WTC11 (cell line): ENCODE measurements at regions of chr19 and their contacts with region 1.

Region 1: GRCh38 chr19:4267101-4267900 is 11.8 kb upstream of the SHD start:
- DNase-seq: peak; percentile 88
- ATAC-seq: peak; percentile 93
- H3K4me3 Mint-ChIP-seq: no peak overlapping the region
- H3K27ac Mint-ChIP-seq: 0 out of 2 replicates have a peak overlapping the region, but pooled peaks have one; percentile 5
- H3K4me1 Mint-ChIP-seq: no peaks in the 10 kb centered on the region; the same call in 1 of the 2 replicates
- H3K27me3 Mint-ChIP-seq: no peaks in the 10 kb centered on the region
- CTCF ChIP-seq: peak; percentile 86

Region 2: DNA sequence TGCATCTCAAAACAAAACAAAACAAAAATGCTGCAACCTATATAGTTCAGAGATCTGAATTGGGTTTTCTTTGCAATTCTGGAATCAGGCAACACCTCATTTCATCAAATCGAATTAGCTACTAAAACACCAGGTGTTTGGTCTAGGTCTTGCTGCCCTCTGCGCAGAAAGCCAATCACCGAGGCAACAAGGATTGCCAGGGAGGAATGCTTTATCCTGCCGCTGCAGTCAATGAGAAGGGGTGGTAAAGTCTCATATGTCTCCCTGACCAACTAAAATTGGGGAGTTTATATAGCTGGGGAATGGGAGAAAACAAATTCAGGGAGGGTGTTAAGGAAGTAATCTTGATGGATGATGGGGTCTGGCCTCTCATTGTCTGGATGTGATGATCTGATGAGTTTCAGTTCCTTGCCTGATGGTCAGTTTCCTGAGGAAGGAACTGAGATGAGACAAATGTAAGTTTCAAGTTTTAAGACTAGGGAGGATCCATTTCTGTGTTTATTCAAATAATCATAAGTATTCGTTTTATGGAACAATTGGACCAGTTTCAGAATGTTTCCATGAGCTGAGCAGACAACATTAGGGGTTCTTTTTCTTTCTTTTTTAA is 25.4 kb before region 1 on chr19:
- CTCF ChIA-PET with region 1: interaction called, 23 read pairs
- POLR2A ChIA-PET with region 1: no interaction called
- DNase-seq: no peak
- ATAC-seq: no peak
- H3K4me3 Mint-ChIP-seq: no peak overlapping the region
- H3K27ac Mint-ChIP-seq: no peak overlapping the region
- H3K4me1 Mint-ChIP-seq: no peaks in the 10 kb centered on the region
- H3K27me3 Mint-ChIP-seq: peaks cover 17% of the 10 kb centered on the region
- CTCF ChIP-seq: no peak

Region 3: GRCh38 chr19:4295972-4296771 is 28.9 kb after region 1 on chr19:
- CTCF ChIA-PET with region 1: interaction called, 54 read pairs
- POLR2A ChIA-PET with region 1: no interaction called
- DNase-seq: no peak
- ATAC-seq: peak; percentile 38
- H3K4me3 Mint-ChIP-seq: no peak overlapping the region
- H3K27ac Mint-ChIP-seq: no peak overlapping the region
- H3K4me1 Mint-ChIP-seq: peaks cover 3% of the 10 kb centered on the region; the same call in 1 of the 2 replicates
- H3K27me3 Mint-ChIP-seq: peaks cover 15% of the 10 kb centered on the region
- CTCF ChIP-seq: no peak

Region 4: GRCh38 chr19:4342615-4343369 is 75.5 kb after region 1 on chr19:
- CTCF ChIA-PET with region 1: interaction called, 111 read pairs
- POLR2A ChIA-PET with region 1: interaction called, 16 read pairs
- DNase-seq: peak; percentile 96
- ATAC-seq: peak; percentile 93
- H3K4me3 Mint-ChIP-seq: peak overlapping the region; percentile 85
- H3K27ac Mint-ChIP-seq: peak overlapping the region; percentile 98
- H3K4me1 Mint-ChIP-seq: peaks cover 15% of the 10 kb centered on the region
- H3K27me3 Mint-ChIP-seq: peaks cover 12% of the 10 kb centered on the region
- CTCF ChIP-seq: no peak

Region 5: GRCh38 chr19:4375164-4376027 is 108.1 kb after region 1 on chr19:
- CTCF ChIA-PET with region 1: interaction called, 47 read pairs
- POLR2A ChIA-PET with region 1: no interaction called
- DNase-seq: peak; percentile 84
- ATAC-seq: peak; percentile 79
- H3K4me3 Mint-ChIP-seq: no peak overlapping the region
- H3K27ac Mint-ChIP-seq: peak overlapping the region; percentile 88
- H3K4me1 Mint-ChIP-seq: peaks cover 47% of the 10 kb centered on the region
- H3K27me3 Mint-ChIP-seq: no peaks in the 10 kb centered on the region
- CTCF ChIP-seq: no peak

Region 6: DNA sequence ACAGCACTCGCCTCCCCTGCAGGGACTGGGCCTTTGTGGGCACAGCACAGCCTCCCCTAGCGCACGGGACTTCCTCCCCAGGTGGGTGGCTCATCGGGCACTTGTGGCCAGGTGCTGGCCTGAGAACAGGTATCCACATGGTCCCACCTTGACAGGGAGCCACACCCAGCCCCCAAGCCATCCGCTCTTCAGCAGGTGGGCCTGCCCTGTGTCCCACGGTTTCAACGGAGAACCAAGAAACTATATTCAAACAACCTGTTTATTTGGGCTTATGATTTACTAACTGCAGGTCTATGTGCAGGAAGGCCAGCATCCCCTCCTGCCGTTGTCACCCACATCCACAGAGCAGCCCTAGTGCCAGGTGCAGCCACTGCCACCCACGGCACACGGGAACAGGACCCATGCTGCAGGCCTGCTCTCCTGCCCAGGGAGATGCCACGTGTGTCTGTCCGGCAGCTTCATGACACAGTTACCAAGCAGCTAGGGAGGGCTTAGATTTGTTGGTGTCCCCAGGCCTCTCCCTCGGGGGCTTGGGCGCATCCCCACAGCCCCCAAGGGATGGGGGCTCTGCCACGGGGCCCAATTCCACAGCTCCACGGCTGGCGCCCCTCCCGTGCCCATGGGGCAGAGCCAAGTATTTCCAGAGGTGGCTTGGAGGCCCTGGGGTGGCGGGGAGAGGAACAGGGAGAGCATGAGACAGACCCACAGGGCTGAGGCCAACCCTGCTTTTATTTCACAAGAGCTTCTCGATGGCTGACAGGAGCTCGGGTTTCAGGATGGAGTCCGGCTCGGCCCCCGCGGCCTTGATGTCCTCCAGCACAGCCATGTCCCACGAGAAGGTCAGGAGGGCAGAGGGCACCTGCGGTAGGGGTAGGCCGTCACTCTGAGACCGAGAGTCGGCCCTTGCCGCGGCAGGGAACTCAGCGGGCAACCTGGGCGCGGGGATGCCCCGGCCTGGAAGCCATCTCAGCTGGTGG is 177.8 kb after region 1 on chr19:
- CTCF ChIA-PET with region 1: interaction called, 13 read pairs
- POLR2A ChIA-PET with region 1: no interaction called
- DNase-seq: no peak
- ATAC-seq: no peak; the same call in 1 of the 2 replicates
- H3K4me3 Mint-ChIP-seq: no peak overlapping the region
- H3K27ac Mint-ChIP-seq: peak overlapping the region; percentile 81; the same call in 1 of the 2 replicates
- H3K4me1 Mint-ChIP-seq: 0 out of 2 replicates have a peak, but pooled peaks cover 3% of the 10 kb centered on the region
- H3K27me3 Mint-ChIP-seq: no peaks in the 10 kb centered on the region
- CTCF ChIP-seq: no peak